HEK293 (cell line): ENCODE measurements at regions of chr4 and their contacts with region 1.

Region 1: GRCh38 chr4:155809835-155810234 is 51.0 kb downstream of the GUCY1B1 start:
- H3K4me3 ChIP-seq: no peak overlapping the region
- H3K27ac ChIP-seq: no peak overlapping the region
- H3K4me1 ChIP-seq: no peaks in the 10 kb centered on the region
- CTCF ChIP-seq: 0 out of 2 replicates have a peak, but pooled peaks have one; percentile 29

Region 2: DNA sequence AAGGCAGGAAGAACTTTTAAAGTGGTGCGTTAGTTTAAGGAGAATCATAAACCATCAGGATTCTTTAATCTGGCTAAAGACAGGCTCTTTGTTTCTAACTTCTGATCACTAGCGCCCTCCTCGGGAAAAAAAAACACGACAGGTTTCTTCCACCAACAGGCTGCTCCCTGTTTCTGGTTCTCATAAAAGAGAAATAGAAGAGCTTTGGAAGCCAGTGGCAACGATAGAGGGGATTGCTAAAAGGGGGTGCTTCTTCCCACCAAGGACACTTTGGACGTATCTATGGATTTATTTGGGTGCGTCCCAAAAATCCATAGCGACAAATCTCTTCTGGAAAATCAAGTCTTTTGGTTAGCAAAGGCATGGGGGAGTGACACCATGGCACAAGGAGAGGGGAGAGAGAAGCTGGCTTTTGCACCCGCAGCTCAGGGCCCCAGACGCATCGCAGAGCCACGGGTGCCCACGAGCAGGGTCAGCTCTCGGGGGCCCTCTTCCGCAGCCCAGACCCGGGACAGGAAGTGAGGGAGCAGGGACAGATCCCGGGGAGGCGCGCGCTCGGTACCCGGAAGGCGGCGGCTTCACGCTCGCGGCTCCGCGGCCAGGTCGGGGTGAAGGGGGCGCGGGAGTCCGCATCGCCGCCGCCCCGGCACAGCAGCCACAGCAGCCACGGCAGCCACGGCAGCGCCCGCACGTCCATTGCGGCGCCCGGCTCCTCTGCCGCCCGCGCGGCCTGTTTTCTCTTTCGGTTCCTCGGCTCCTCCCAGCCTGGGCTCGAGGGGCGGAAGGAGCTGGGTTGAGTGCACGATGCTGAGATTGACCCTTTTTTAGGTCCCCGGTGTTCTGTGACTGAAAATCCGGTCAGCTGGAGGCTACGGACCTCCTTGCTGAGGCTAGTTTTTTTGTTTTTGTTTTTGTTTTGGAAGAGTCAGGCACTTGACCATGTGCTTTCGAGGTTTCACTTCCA is 143.6 kb after region 1 on chr4 and contains the start of gene CTSO:
- CTCF ChIA-PET with region 1: interaction called, 32 read pairs
- POLR2A ChIA-PET with region 1: no interaction called
- H3K4me3 ChIP-seq: peak within 1 kb of the TSS; percentile 45
- H3K27ac ChIP-seq: peak within 1 kb of the TSS; percentile 88
- H3K4me1 ChIP-seq: 0 out of 2 replicates have a peak, but pooled peaks cover 4% of the 10 kb centered on the region
- CTCF ChIP-seq: peak; percentile 74; the same call in 1 of the 2 replicates

Region 3: GRCh38 chr4:156006192-156006591 is 196.4 kb after region 1 on chr4:
- CTCF ChIA-PET with region 1: no interaction called
- POLR2A ChIA-PET with region 1: no interaction called
- H3K4me3 ChIP-seq: no peak overlapping the region
- H3K27ac ChIP-seq: no peak overlapping the region
- H3K4me1 ChIP-seq: no peaks in the 10 kb centered on the region
- CTCF ChIP-seq: no peak

Region 4: DNA sequence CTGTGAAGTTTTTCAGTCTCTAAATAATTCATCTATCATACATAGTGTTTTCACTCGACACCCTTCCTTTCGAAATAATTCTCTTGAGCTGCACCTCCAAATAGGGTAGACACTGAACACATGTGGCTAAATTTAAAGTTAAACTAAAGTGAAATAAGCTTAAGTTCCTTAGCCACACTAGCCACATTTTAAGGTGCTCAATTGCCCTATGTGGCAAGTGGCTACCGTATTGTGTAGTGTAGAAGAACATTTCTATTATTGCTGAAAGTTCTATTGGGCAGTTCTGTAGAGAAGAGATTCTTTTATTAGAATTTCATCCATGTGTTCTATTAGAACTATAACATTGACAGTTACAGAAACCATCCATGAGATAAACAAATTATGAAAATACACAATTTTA is 250.8 kb after region 1 on chr4:
- CTCF ChIA-PET with region 1: no interaction called
- POLR2A ChIA-PET with region 1: no interaction called
- H3K4me3 ChIP-seq: no peak overlapping the region
- H3K27ac ChIP-seq: no peak overlapping the region
- H3K4me1 ChIP-seq: no peaks in the 10 kb centered on the region
- CTCF ChIP-seq: no peak